Calu3 (cell line): ENCODE measurements at regions of chr22 and their contacts with region 1.

Region 1: GRCh38 chr22:17501679-17502285 is 61.5 kb upstream of the SLC25A18 start:
- DNase-seq: peak; percentile 56
- H3K4me3 Mint-ChIP-seq: no peak overlapping the region
- H3K27ac Mint-ChIP-seq: no peak overlapping the region
- H3K4me1 Mint-ChIP-seq: no peaks in the 10 kb centered on the region
- H3K27me3 Mint-ChIP-seq: peaks cover 44% of the 10 kb centered on the region
- CTCF ChIP-seq: no peak

Region 2: GRCh38 chr22:16917144-16918003 is 584.4 kb before region 1 on chr22:
- CTCF ChIA-PET with region 1: interaction called, 8 read pairs
- intact Hi-C with region 1: loop called (anchors 5 kb)
- DNase-seq: peak; percentile 68
- H3K4me3 Mint-ChIP-seq: no peak overlapping the region
- H3K27ac Mint-ChIP-seq: no peak overlapping the region
- H3K4me1 Mint-ChIP-seq: no peaks in the 10 kb centered on the region
- H3K27me3 Mint-ChIP-seq: no peaks in the 10 kb centered on the region
- CTCF ChIP-seq: peak; percentile 57

Region 3: DNA sequence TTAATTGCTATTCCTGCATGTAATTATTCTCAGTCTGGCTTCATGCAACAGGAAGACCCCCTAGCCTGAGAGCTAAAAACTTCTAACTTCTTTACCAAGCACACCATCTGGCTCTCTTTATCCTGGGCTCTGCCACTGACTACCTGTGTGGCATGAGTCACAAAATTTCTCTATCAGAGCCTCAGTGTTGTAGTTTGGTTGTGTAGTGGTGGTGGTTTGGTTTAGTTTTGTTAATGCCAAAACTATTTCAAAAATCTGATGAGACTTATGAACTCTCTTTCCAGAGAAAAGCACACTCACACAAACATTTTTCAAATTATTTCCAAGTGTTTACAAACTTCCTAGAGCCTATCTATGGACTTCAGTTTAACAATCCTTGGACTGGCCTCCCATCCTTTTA is 424.5 kb before region 1 on chr22:
- CTCF ChIA-PET with region 1: interaction called, 40 read pairs
- intact Hi-C with region 1: loop called (anchors 1 kb)
- DNase-seq: no peak
- H3K4me3 Mint-ChIP-seq: no peak overlapping the region
- H3K27ac Mint-ChIP-seq: no peak overlapping the region
- H3K4me1 Mint-ChIP-seq: no peaks in the 10 kb centered on the region
- H3K27me3 Mint-ChIP-seq: peaks cover 23% of the 10 kb centered on the region
- CTCF ChIP-seq: no peak

Region 4: DNA sequence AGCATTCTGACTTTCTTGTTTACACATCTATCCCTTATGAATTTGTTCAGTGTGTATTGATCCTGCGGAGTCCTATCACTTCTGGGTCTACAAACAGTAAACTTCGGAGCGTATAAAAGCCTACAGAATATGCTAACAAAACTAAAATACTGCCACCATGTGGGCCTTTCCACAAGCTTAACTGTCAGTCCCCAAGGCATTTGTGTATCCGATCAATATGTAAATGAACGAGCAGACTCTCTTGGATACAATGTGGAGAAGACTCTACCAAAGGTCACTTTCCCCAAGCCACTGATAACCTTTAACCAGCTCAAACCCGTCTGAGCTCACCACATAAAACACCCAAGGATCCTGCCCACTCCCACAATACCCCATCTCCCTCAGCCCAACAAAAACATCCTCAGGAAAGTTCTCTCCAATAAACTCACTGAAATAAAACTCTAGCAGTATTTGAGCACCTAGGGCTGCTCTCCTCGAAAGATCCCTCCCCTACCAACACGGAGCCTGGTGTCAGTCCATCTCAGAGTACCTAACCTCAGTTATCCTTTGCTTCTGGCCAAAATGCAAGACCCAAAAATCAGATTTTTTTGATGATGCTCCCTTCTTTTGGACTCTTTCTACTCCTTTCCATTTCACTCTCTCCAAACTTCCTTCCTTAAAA is 300.4 kb before region 1 on chr22:
- CTCF ChIA-PET with region 1: interaction called, 22 read pairs
- intact Hi-C with region 1: loop called (anchors 1 kb)
- DNase-seq: peak; percentile 32
- H3K4me3 Mint-ChIP-seq: no peak overlapping the region
- H3K27ac Mint-ChIP-seq: no peak overlapping the region
- H3K4me1 Mint-ChIP-seq: peaks cover 14% of the 10 kb centered on the region
- H3K27me3 Mint-ChIP-seq: peaks cover 71% of the 10 kb centered on the region
- CTCF ChIP-seq: peak; percentile 31